ENCODE measurements at regions of chrX and their contacts with region 1.

Region 1: DNA sequence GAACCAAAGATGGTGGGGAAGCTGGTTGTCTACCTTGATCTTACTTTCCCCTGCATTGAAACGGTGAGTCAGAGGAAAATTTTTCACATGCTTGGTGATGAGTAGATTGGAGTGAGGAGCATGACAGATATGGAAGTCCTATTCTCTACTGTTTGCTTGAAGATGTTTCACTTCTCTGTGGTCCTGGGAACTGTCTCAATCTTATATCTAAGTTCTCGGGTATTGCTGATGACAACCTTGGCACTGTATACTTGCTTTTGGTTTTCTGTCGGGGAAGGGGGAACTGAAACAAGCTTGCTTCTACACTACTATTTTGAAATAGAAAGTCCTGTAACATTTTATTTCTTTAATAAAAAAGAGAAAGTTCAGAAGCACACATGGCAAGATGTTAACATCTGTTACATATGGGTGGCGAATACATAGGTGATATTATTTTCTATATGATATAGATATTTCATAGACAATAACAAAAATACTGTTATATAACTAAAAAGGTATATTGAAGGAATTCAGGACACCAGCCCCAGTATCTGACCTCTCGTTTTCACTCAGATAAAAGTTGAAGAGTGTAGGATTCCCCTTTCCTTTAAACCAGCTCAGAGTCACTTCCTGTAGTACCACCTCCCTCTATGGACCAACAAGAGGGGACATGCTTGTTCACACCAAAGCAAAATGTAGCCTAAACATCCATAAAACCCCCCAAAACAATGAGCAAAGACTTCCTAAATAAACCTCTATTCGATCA is 88.8 kb downstream of the FMR1NB start:
- DNase-seq: peak; percentile 14
- CTCF ChIP-seq: no peak

Region 2: GRCh38 chrX:148517176-148517575 is 447.2 kb after region 1 on chrX:
- in situ Hi-C with region 1: no loop called
- DNase-seq: no peak
- CTCF ChIP-seq: no peak

Region 3: DNA sequence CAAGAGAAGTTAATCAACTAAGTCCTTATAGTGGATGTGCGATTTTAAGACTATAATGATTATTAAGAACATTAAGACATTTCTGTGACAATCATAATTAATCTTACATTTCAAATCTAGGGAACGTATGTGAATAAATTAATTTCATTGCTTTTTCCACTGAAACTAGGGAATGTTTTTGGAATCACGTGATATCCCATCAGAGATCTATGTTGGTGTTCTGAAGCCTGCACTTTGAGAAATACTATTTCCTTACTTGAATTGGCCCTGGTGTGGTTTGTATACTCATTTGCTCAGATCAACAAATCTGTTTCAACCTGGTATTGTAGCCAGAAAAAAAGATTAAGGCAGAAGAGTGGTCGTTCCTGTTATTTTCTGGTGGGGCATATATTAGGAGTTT is 1069.7 kb after region 1 on chrX:
- in situ Hi-C with region 1: no loop called
- DNase-seq: no peak
- CTCF ChIP-seq: no peak

Region 4: GRCh38 chrX:149286940-149287349 is 1217.0 kb after region 1 on chrX:
- in situ Hi-C with region 1: loop called (anchors 25 kb)
- DNase-seq: peak; percentile 36
- CTCF ChIP-seq: peak; percentile 71

Measured in GM13976 (cell line).